ENCODE measurements at regions of chr1 and their contacts with region 1.

Region 1: DNA sequence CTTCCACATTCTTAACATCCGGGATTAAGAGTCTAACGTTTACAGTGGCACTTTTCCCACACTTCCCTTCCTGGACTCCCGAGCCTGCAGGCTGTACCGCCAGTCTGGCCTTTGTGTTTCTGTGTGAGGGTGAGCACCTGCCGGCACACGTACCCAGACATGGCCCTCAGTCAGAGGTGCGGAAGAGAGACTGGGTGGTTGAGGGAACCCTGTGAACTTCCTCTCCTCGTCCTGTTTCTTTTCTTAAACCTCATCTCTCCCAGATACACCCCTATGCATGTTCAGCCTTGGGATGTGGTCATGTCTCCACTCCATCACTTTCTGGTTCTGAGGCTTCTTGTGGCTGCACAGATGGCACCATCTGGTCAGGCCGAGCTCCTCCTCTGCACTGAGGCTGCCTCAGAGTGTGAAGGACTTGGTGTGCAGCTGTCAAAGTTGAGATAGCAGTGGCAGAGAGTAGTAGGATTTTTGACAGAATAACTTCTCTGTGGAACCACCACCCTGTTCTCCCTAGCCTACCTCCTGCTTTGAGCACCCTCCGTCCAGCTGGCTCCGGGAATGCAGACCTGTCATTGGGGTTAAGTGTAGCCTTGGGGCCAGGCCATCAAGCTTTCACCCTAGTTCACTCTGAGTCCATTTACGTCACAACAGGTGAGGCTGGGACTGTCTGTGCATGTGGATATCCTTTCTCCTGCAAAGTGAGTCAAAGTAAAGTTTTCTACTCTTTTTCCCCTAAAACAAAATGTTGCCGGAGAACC is 31.4 kb downstream of the VASH2 start:
- DNase-seq: no peak
- H3K4me3 ChIP-seq: no peak overlapping the region
- H3K27ac ChIP-seq: no peak overlapping the region
- H3K4me1 ChIP-seq: no peaks in the 10 kb centered on the region
- H3K27me3 ChIP-seq: peaks cover 9% of the 10 kb centered on the region; the same call in 1 of the 2 replicates

Region 2: GRCh38 chr1:212077051-212077450 is 904.7 kb before region 1 on chr1:
- in situ Hi-C with region 1: loop called (anchors 25 kb)
- DNase-seq: peak; percentile 14
- H3K4me3 ChIP-seq: no peak overlapping the region
- H3K27ac ChIP-seq: no peak overlapping the region
- H3K4me1 ChIP-seq: no peaks in the 10 kb centered on the region
- H3K27me3 ChIP-seq: no peaks in the 10 kb centered on the region

Region 3: DNA sequence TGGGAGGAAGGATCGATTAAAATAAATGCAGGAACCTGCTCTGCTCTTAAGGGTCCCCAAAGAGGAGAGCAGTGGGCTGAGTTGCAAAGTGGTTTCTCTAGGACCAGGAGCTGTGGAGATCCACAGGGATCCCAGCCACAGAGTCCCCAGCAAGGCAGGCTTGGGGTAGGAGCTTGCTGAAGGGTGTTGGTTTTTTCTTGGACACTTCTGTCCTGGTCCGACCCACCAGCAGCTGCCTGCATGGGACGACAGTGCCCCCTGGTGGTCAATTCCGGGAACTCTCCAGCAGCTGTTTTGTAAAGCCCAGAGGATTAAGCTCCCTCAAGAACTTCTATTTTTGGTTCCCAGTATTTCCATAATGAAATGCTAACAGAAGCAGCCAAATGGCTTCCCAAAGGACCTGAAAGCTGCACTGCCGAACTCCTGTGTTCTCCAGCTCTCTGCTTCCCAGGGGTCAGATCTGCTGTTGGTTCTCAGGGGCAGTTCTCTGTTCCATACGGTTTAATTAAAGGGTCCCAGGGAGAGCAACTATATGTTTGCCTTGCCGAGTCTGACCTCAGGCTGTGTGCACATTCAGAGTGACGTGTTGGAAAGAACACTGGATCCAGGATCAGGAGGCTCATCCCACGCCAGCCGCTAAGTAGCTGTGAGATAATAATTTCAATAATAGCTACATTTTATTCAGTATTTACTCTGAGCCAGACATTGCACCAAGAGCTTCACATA is 525.8 kb before region 1 on chr1:
- in situ Hi-C with region 1: loop called (anchors 25 kb)
- DNase-seq: peak; percentile 76
- H3K4me3 ChIP-seq: no peak overlapping the region
- H3K27ac ChIP-seq: no peak overlapping the region
- H3K4me1 ChIP-seq: peaks cover 4% of the 10 kb centered on the region; the same call in 1 of the 2 replicates
- H3K27me3 ChIP-seq: no peaks in the 10 kb centered on the region

Region 4: DNA sequence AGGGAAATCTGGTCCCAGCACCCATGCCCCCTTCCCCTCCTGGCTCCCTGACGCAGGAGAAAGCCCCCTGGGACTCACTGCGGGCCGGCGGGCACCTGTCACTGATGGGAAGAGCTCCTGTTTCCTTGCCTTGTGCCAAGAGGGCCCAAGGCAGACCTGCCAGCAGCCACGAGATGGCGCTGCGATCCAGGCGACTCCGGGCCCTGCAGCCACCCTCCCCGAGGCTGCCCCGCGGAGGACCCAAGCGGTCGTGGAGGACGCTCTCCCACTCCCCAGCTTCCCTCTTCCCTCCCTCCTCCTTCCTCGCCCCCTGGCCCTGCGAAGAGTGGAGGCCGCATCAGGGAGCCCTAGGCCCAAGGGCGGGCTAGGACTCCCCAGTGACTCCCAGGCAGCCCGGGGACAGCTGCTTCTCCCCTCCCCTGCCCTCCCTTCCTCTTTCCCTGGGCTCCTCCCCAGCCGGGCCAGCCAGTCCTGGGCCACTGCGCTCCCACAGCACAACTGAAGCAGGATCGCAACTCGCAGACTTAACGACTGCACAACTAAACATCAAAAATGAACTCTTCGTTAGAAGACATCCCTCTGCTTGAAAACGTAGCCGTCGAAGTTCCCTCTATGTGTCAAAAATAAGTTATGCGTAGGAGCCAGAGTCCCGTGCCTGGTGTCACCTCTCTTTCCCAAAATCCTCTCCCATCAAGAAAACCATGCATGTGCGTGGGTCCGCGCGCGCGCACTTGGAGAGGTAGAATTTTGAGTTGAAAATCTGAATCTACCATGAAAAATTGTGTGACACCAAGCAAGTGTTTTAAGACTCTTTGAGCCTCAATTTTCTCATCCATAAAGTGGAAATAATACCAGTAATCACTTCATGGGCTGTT is 316.3 kb before region 1 on chr1:
- in situ Hi-C with region 1: loop called (anchors 25 kb)
- DNase-seq: peak; percentile 90
- H3K4me3 ChIP-seq: peak overlapping the region; percentile 72
- H3K27ac ChIP-seq: 0 out of 2 replicates have a peak overlapping the region, but pooled peaks have one; percentile 4
- H3K4me1 ChIP-seq: peaks cover 16% of the 10 kb centered on the region
- H3K27me3 ChIP-seq: no peaks in the 10 kb centered on the region